Ovary (tissue), 10 donors: ENCODE measurements at regions of chr4 and their contacts with region 1.

Region 1: GRCh38 chr4:64882311-64883086 is 473.2 kb upstream of the TECRL start:
- DNase-seq: no peak
- H3K4me3 ChIP-seq: no peak overlapping the region
- H3K27ac ChIP-seq: no peak overlapping the region
- H3K4me1 ChIP-seq: no peaks in the 10 kb centered on the region
- H3K27me3 ChIP-seq: no peaks in the 10 kb centered on the region
- CTCF ChIP-seq: no peak
- EP300 ChIP-seq: no peak
- POLR2A ChIP-seq: no peak

Region 2: DNA sequence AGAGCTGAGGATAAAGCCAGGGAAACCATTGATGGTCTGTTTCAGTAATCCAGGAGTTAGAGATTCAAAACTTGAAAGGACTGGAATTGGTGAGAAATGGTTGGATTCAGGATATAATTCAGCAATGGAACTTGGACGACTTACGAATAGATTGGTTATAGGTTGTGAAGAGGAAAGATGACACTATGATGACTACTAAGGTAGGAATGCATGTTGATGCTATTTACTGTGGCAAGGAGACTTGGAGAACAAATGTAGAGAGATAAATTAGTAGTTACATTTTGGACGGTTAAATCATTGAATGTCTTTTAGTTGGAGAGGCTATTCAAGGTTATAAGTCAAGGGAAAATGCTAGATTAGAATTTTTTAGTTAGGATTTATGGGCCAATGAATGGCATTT is 107.9 kb before region 1 on chr4:
- intact Hi-C with region 1: no loop called
- DNase-seq: no peak
- H3K4me3 ChIP-seq: no peak overlapping the region
- H3K27ac ChIP-seq: no peak overlapping the region
- H3K4me1 ChIP-seq: no peaks in the 10 kb centered on the region
- H3K27me3 ChIP-seq: no peaks in the 10 kb centered on the region
- CTCF ChIP-seq: no peak
- EP300 ChIP-seq: no peak
- POLR2A ChIP-seq: no peak

Region 3: DNA sequence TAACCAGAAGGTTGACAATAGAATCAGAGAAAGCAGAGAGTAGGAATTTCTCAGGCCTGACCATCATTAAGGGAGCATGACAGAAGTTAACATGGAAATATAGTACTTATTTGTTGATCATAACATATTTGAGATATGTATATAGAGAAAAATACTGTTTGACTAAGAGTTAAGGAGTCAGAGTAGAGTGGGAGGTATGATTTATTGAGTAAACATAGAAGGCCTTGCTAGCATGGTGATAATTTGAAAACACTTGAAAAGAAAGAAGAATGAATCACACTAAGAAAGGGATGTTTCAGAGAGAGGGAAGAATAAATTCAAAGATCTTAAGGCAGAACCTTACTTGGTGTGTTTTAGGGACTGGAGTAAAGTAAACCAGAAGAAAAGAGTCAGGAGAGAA is 36.1 kb before region 1 on chr4:
- intact Hi-C with region 1: loop called in 1 of 4 experiments (anchors 1 kb)
- DNase-seq: no peak
- H3K4me3 ChIP-seq: no peak overlapping the region
- H3K27ac ChIP-seq: no peak overlapping the region
- H3K4me1 ChIP-seq: no peaks in the 10 kb centered on the region
- H3K27me3 ChIP-seq: no peaks in the 10 kb centered on the region
- CTCF ChIP-seq: no peak
- EP300 ChIP-seq: no peak
- POLR2A ChIP-seq: no peak